HEK293 (cell line): ENCODE measurements at regions of chr12 and their contacts with region 1.

Region 1: GRCh38 chr12:94284046-94284445 is 135.7 kb downstream of the PLXNC1 start:
- H3K4me3 ChIP-seq: no peak overlapping the region
- H3K27ac ChIP-seq: no peak overlapping the region
- H3K4me1 ChIP-seq: no peaks in the 10 kb centered on the region; the same call in 1 of the 2 replicates
- CTCF ChIP-seq: no peak

Region 2: GRCh38 chr12:94204499-94205247 is 79.4 kb before region 1 on chr12:
- CTCF ChIA-PET with region 1: no interaction called
- POLR2A ChIA-PET with region 1: interaction called, 13 read pairs
- H3K4me3 ChIP-seq: no peak overlapping the region
- H3K27ac ChIP-seq: no peak overlapping the region
- H3K4me1 ChIP-seq: peaks cover 6% of the 10 kb centered on the region
- CTCF ChIP-seq: no peak